Sciatic nerve (tissue), 2 donors: ENCODE measurements at regions of chr7 and their contacts with region 1.

Region 1: DNA sequence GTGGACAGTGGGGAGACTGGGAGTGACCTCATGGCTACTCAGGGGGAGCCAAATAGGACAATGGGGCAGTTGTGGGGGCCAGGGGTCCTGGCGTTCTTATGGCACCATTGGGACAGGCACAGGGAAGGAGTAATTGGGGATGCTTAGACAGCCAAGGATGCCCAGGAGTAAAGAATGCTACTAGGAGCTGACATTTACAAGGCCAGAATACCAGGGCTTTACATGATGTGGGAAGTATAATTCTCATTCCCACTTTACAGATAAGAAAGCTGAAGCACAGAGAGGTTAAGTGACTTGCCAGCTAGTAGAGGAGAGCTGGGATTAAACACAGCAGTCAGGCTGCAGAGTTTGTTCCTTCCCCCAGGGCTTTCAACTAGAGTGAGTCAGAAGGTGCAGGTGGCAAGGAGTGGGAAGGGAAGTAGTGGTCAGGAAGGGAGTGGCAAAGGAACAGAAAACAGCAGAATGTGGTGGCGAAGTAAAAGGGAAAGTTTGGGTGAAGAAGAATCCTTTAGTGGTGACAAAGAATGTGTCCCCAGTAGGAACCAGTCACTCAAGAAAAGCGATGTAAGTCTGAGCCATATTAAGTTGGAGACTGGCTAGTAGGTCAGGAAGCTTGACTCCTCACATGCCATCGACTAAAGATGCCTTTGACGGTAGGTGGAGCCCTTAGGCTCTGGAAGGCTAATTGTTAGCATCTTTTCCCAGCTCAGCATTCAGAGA is 32.8 kb downstream of the CPVL start:
- DNase-seq: no peak
- ATAC-seq: no peak

Region 2: GRCh38 chr7:29408841-29409243 is 295.3 kb after region 1 on chr7:
- intact Hi-C with region 1: loop called (anchors 10 kb)
- DNase-seq: peak; percentile 65
- ATAC-seq: peak; percentile 74